Activated T-helper 1 cell treated with anti-CD3 and anti-CD28 coated beads, Interleukin-12 subunit alpha, Interleukin-12 subunit beta, Interleukin-2, Interleukin-4 antibody, amounts not matched to agents 30 ng/mL and 10 ng/mL and 1 ng/mL, durations not matched to agents 14 hours and 24 hours and 36 hours (primary cell): ENCODE measurements at regions of chrX and their contacts with region 1.

Region 1: GRCh38 chrX:118495061-118495921 is at the start of gene DOCK11:
- DNase-seq: peak; percentile 75
- H3K4me3 Mint-ChIP-seq: peak within 1 kb of the TSS; percentile 98
- H3K27ac Mint-ChIP-seq: peak within 1 kb of the TSS; percentile 97
- H3K4me1 Mint-ChIP-seq: peaks cover 30% of the 10 kb centered on the region
- H3K27me3 Mint-ChIP-seq: no peaks in the 10 kb centered on the region
- total RNA-seq, gene DOCK11: 28.6 and 30.1 TPM in 2 replicates

Region 2: GRCh38 chrX:118325453-118325852 is 169.8 kb before region 1 on chrX:
- intact Hi-C with region 1: no loop called
- DNase-seq: no peak
- H3K4me3 Mint-ChIP-seq: no peak overlapping the region
- H3K27ac Mint-ChIP-seq: no peak overlapping the region
- H3K4me1 Mint-ChIP-seq: no peaks in the 10 kb centered on the region
- H3K27me3 Mint-ChIP-seq: peaks cover 4% of the 10 kb centered on the region

Region 3: DNA sequence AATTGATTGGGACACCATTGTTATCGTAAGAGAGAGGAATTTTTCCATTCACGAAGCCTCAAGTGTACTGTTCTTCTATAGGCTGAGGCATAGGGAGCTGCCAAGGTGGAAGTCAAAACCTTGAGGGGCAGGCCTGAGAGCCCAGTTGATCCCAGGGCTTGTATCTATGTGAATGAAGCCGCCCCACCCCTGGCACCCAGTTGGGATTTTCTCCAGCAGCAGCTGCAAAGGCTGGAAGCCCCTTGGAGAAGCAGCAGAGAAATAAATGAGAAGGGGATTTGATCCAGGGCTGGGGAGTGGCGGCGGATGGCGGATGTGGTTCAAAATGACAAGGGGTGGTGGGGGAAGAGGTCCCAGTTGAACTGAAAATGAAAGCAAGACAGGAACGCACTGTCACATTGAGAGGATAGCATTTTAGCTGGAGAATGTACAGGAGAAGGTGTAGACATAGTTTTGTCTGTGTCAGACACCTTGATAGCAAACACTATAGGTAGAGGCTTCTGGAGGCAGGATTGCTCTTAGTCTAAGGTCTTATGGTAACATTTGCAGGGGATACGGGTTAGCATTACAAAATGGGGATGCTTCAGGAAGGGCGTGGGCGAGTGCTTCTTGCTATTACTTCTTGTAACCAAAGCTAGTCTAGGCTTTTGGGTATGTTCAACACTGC is 32.9 kb after region 1 on chrX:
- intact Hi-C with region 1: loop called (anchors 1 kb)
- DNase-seq: peak; percentile 49
- H3K4me3 Mint-ChIP-seq: peak overlapping the region; percentile 83
- H3K27ac Mint-ChIP-seq: peak overlapping the region; percentile 97
- H3K4me1 Mint-ChIP-seq: peaks cover 73% of the 10 kb centered on the region
- H3K27me3 Mint-ChIP-seq: no peaks in the 10 kb centered on the region

Region 4: GRCh38 chrX:118571829-118572228 is 76.5 kb after region 1 on chrX:
- intact Hi-C with region 1: loop called (anchors 2 kb)
- DNase-seq: no peak
- H3K4me3 Mint-ChIP-seq: no peak overlapping the region
- H3K27ac Mint-ChIP-seq: no peak overlapping the region
- H3K4me1 Mint-ChIP-seq: peaks cover 13% of the 10 kb centered on the region
- H3K27me3 Mint-ChIP-seq: no peaks in the 10 kb centered on the region